GM13977 (cell line): ENCODE measurements at regions of chr15 and their contacts with region 1.

Region 1: DNA sequence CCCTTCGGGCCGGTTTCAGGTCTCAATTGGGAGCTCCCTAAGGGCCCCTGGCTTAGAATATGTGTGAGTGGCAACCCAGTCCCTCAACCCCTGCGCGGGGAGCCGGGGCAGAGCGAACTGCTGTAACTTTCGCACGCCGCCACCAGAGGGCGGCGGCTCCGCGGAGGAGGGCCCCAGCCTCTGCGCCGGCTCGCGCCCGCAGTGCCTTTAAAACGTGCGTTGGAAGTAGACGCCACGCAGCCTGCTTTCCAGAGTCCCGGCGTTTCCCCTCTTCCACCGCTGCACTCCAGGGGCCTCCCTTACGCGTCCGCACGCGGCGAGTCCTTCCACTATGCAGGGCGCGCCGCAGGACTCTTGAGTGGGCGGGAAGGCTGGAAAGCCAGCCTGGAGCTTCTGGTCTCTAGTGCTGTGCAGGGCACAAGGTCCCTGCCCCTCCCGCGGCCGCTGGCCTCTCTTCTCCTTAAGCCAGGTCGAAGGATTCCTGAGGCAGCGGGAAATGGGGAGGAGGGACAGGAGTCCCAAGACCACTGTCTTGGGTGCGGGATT is 23.7 kb upstream of the RNU6-1 start:
- DNase-seq: peak; percentile 80
- CTCF ChIP-seq: peak; percentile 93

Region 2: GRCh38 chr15:68154923-68155559 is 291.5 kb after region 1 on chr15:
- in situ Hi-C with region 1: loop called (anchors 10 kb)
- DNase-seq: peak; percentile 11
- CTCF ChIP-seq: peak; percentile 67